AG04450 (cell line): ENCODE measurements at regions of chr7 and their contacts with region 1.

Region 1: DNA sequence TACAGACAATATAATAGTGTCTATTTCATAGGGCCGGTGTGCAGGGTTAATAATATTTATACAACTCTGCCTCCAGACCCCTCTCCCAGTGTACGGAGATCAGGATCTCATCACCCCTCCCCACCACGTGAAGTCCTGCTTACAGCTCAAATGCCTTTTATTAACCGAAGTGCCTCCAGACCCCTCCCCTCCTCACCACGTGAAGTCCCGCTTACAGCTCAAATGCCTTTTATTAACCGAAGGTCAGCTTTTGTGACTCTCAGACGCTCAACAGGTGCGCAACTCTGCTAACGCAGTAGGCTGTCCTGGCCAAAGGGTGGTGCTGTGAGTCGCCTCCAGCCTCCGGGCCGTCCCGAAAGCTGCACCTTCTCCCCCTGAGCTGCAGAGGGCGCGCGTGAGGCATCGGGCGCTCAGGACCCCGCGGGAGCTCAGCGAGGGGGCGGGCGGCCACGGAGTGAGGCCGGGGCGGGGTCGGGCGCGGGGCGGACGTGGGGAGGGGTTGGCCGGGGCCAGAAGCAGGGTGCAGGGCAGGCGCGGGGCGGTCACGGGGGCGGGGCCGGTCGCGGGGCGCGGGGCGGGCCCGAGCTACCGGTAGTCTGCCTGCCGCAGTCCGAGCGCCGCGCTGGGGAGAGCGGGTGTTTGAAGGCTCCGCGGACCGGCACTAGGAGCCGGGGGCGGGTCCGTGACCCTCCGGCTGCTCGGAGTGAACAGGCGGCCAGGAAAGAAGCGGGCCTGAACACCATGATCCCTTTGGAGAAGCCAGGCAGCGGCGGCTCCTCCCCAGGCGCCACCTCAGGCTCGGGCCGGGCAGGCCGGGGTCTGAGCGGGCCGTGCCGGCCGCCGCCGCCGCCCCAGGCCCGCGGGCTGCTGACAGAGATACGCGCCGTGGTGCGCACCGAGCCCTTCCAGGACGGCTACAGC is at the start of gene STK17A:
- DNase-seq: peak; percentile 79
- H3K4me3 ChIP-seq: peak within 1 kb of the TSS; percentile 90
- H3K27ac ChIP-seq: peak within 1 kb of the TSS; percentile 82
- H3K27me3 ChIP-seq: no peaks in the 10 kb centered on the region
- CTCF ChIP-seq: peak; percentile 99
- polyA plus RNA-seq, gene STK17A: 29.5 and 39.7 TPM in 2 replicates

Region 2: DNA sequence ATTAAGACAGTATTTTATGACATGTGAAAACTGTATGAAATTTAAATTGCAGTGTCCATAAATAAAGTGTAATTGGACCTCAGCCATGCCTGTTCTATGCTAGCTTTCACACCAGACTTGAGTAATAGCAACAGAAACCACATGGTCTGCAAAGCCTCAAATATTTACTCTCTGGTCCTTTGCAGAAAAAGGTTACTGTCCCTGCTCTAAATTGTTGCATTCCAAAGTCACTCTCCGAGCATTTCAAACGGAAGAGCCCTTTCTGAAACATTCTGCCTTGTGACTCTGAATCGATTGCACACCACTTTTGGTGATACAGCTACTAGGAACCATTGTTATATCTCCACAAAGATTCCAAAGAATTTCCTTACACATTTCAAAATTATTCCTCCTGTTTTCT is 80.9 kb before region 1 on chr7:
- CTCF ChIA-PET with region 1: interaction called, 12 read pairs
- POLR2A ChIA-PET with region 1: interaction called, 3 read pairs
- DNase-seq: no peak
- H3K4me3 ChIP-seq: no peak overlapping the region
- H3K27ac ChIP-seq: no peak overlapping the region
- H3K27me3 ChIP-seq: peaks cover 18% of the 10 kb centered on the region
- CTCF ChIP-seq: no peak

Region 3: DNA sequence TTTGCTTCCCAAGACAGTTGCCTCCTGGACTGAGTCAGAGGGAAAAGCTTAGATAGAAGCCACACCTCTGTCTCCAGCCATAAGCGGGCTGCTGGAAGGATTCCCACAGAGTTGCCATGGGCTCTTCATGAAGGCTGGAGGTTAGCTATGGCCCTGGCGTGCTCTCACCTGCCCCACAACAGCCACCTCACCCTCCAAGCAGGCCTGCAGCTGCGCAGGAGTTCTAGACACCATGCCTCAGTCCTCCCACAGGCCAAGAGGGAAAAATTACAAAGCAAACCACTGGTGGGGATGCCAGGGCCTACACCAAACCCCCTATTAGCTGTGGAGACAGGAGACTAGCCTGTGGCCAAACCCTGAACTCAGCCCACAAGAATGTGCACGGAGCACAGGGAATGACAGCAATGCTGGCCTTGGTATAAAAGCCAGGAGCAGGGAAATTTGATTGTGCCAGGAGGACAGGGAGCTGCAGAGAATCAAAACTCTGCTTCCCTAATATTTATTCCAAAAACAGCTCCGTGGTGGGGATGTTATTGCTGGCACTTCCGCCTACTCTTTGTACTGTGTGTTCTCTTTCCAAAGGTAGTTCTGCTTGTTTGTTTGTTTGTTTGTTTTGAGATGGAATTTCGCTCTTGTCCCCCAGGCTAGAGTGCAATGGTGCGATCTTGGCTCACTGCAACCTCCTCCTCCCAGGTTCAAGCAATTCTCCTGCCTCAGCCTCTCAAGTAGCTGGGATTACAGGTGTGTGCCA is 60.2 kb before region 1 on chr7:
- CTCF ChIA-PET with region 1: no interaction called
- POLR2A ChIA-PET with region 1: no interaction called
- DNase-seq: no peak
- H3K4me3 ChIP-seq: no peak overlapping the region
- H3K27ac ChIP-seq: no peak overlapping the region
- H3K27me3 ChIP-seq: peaks cover 8% of the 10 kb centered on the region
- CTCF ChIP-seq: no peak

Region 4: GRCh38 chr7:43572516-43573049 is 10.2 kb before region 1 on chr7:
- CTCF ChIA-PET with region 1: interaction called, 119 read pairs
- POLR2A ChIA-PET with region 1: interaction called, 30 read pairs
- DNase-seq: peak; percentile 98
- H3K4me3 ChIP-seq: no peak overlapping the region
- H3K27ac ChIP-seq: peak overlapping the region; percentile 85
- H3K27me3 ChIP-seq: no peaks in the 10 kb centered on the region
- CTCF ChIP-seq: no peak

Region 5: DNA sequence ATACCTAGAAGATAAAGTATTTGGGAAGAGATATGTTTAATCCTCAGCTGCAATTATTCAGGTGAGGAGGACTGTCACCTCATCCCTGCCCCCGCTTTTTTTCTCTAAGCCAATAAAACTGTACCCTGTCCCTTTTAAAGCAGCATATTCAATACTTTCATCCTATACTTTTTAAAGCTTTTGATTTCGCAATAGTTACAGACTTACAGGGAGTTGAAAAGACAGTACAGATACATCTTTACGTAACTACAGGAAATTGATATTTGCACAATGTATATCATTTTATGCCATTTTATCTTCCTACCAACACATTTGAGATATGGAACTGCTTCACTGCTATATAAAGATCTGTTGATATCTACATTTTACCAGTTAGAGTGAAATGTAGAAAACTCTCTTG is 47.7 kb after region 1 on chr7:
- CTCF ChIA-PET with region 1: interaction called, 10 read pairs
- POLR2A ChIA-PET with region 1: no interaction called
- DNase-seq: no peak
- H3K4me3 ChIP-seq: no peak overlapping the region
- H3K27ac ChIP-seq: no peak overlapping the region
- H3K27me3 ChIP-seq: no peaks in the 10 kb centered on the region
- CTCF ChIP-seq: no peak

Region 6: DNA sequence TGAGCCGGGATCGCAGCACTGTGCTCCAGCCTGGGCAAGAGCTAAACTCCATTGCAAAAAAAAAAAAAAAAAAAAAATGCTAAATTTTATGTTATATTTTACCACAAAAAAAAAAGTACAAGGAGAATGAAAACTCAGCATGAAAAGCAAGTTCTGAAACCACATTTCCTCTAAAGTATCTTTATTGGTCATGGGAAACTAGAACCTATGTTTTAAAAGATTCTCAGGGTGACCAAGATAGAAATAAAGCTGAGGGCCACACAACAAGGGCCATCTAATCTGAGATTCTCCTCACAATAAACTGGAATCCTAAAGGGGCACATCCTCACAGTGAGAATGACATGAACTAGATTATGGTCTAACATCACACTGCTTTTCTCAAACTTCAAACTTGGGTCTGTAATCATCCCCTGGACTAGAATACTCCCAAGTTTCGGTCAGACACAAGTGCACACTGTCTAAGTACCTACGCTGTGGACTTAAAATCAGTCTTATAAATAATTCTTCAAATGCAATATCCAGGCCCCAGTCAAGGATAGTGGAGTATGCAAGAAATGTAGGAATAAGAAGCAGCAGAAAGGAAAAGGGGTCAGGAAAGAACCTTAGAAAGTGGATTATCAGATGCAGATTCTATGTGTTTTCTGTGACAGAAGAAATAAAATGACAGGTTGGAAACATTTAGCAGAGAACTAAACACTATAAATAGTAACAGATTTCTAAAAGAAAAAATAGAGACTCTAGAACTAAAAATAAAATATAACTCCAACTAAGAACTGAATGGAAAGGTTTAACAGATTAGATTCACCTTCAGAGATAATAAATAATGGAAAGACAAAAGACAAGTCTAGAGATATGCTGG is 96.7 kb after region 1 on chr7:
- CTCF ChIA-PET with region 1: interaction called, 12 read pairs
- POLR2A ChIA-PET with region 1: no interaction called
- DNase-seq: no peak
- H3K4me3 ChIP-seq: no peak overlapping the region
- H3K27ac ChIP-seq: no peak overlapping the region
- H3K27me3 ChIP-seq: no peaks in the 10 kb centered on the region
- CTCF ChIP-seq: no peak

Region 7: GRCh38 chr7:43700059-43700501 is 117.3 kb after region 1 on chr7:
- CTCF ChIA-PET with region 1: interaction called, 456 read pairs
- POLR2A ChIA-PET with region 1: interaction called, 56 read pairs
- DNase-seq: peak; percentile 43
- H3K4me3 ChIP-seq: no peak overlapping the region
- H3K27ac ChIP-seq: no peak overlapping the region
- H3K27me3 ChIP-seq: no peaks in the 10 kb centered on the region
- CTCF ChIP-seq: peak; percentile 73

Region 8: DNA sequence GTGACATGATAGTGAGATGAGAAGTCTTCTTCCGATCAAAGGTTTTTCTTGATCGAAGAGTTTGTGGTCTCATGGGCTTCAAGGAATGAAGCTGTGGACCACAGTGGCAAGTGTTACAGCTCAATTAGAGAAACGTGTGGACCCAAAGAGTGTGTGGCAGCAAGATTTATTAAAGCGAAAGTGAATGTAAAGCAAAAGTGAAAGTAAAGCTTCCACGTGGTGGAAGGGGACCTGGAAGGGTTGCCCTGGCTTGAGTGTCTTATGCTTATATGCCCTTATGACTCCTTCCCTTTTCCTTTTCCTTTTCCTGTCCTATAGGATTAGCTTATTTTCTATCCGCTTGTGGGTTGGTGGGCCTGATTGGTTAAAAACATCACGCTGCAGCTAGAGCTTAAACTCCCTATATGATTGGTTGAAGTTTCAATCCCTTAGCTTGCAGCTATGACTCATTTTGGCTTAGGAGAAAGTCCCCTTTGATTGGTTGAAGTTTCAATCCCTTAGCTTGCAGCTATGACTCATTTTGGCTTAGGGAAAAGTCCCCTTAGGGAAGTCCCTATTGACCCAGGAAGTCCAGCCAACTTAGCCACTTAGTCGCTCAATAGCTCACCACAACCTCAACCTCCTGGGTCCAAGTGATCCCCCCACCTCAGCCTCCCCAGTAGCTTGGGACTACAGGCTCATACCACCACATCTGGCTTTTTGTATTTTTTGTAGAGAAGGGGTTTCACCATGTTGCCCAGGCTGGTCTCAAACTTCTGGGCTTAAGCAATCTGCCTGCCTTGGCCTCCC is 251.9 kb after region 1 on chr7:
- CTCF ChIA-PET with region 1: interaction called, 98 read pairs
- POLR2A ChIA-PET with region 1: interaction called, 7 read pairs
- DNase-seq: no peak
- H3K4me3 ChIP-seq: no peak overlapping the region
- H3K27ac ChIP-seq: no peak overlapping the region
- H3K27me3 ChIP-seq: no peaks in the 10 kb centered on the region
- CTCF ChIP-seq: no peak